ENCODE measurements at regions of chr19 and their contacts with region 1.

Region 1: GRCh38 chr19:45643024-45643926 is 4.1 kb upstream of the EML2 start:
- DNase-seq: peak; percentile 80 to 95 (median 88)
- ATAC-seq: peak; percentile 32
- H3K4me3 ChIP-seq: peak overlapping the region in 1 of 2 experiments; percentile 53
- H3K4me3 Mint-ChIP-seq: peak overlapping the region; percentile 53
- H3K27ac ChIP-seq: peak overlapping the region in 1 of 2 experiments; percentile 93
- H3K27ac Mint-ChIP-seq: peak overlapping the region; percentile 75
- H3K4me1 ChIP-seq: peaks cover 46% of the 10 kb centered on the region
- H3K4me1 Mint-ChIP-seq: peaks cover 43% of the 10 kb centered on the region
- H3K27me3 ChIP-seq: no peaks in the 10 kb centered on the region
- H3K27me3 Mint-ChIP-seq: peaks cover 3% of the 10 kb centered on the region
- CTCF ChIP-seq: peak; percentile 96

Region 2: GRCh38 chr19:45038931-45039893 is 604.1 kb before region 1 on chr19 and contains the start of gene CLASRP:
- CTCF ChIA-PET with region 1: no interaction called
- POLR2A ChIA-PET with region 1: no interaction called
- intact Hi-C with region 1: no loop called
- DNase-seq: peak; percentile 73 to 94 (median 89)
- ATAC-seq: peak; percentile 89
- H3K4me3 ChIP-seq: peak within 1 kb of the TSS; percentile 86 to 89
- H3K4me3 Mint-ChIP-seq: peak within 1 kb of the TSS; percentile 93
- H3K27ac ChIP-seq: peak within 1 kb of the TSS; percentile 92 to 96
- H3K27ac Mint-ChIP-seq: peak within 1 kb of the TSS; percentile 90
- H3K4me1 ChIP-seq: peaks cover 23% of the 10 kb centered on the region
- H3K4me1 Mint-ChIP-seq: peaks cover 32% of the 10 kb centered on the region
- H3K27me3 ChIP-seq: no peaks in the 10 kb centered on the region
- H3K27me3 Mint-ChIP-seq: no peaks in the 10 kb centered on the region
- CTCF ChIP-seq: no peak
- total RNA-seq, gene CLASRP: 144 to 153 TPM

Region 3: GRCh38 chr19:45405435-45406225 is 237.6 kb before region 1 on chr19:
- CTCF ChIA-PET with region 1: no interaction called
- POLR2A ChIA-PET with region 1: no interaction called
- intact Hi-C with region 1: loop called in 1 of 2 experiments (anchors 1 kb)
- DNase-seq: peak; percentile 69 to 89 (median 85)
- ATAC-seq: peak; percentile 63
- H3K4me3 ChIP-seq: peak overlapping the region; percentile 63 to 85
- H3K4me3 Mint-ChIP-seq: peak overlapping the region; percentile 97
- H3K27ac ChIP-seq: peak overlapping the region; percentile 68 to 92
- H3K27ac Mint-ChIP-seq: peak overlapping the region; percentile 95
- H3K4me1 ChIP-seq: peaks cover 25% of the 10 kb centered on the region
- H3K4me1 Mint-ChIP-seq: peaks cover 31% of the 10 kb centered on the region
- H3K27me3 ChIP-seq: peaks cover 16 to 26% of the 10 kb centered on the region in 2 experiments
- H3K27me3 Mint-ChIP-seq: peaks cover 26% of the 10 kb centered on the region
- CTCF ChIP-seq: no peak

Region 4: DNA sequence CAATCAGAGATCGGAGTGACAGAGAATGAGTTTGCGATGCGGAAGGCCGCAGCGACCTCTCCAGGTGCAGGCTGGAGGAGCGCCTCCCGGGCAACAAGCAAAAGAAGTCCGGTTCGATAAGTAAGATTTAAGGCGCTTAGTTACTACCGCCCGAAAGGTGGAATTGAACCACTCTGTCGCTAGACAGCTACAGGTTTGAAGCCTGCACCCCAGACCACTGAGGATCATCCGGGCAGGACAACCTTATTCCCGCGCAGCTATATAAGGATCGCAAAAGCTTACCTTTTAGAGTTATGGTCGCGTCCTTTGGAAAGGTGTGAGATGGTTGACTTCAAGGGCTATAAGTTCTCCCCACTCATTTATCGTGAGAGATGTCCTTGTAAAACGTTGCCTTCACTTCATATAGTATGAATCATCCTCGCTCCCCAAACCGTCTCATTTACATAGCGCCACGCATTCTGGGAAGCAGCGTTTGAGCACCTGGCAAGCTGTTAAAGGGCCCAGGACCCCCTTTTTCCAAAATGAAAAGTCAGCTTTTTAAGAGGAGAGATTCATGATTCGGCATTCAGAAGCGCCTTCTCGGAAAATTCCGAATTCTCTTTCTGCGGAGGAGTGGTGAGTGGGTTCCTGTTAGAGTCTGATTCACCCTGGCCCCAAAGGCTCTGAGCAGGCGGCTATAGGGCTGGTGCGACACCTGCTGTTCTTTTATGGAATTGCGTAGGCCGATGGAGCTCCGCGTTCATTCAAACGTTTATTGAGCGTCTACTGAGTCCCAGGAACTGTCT is 164.6 kb before region 1 on chr19:
- CTCF ChIA-PET with region 1: interaction called, 10 read pairs
- POLR2A ChIA-PET with region 1: interaction called, 3 read pairs
- intact Hi-C with region 1: no loop called
- DNase-seq: peak; percentile 82 to 94 (median 89)
- ATAC-seq: peak; percentile 78
- H3K4me3 ChIP-seq: peak overlapping the region; percentile 57 to 74
- H3K4me3 Mint-ChIP-seq: peak overlapping the region; percentile 87
- H3K27ac ChIP-seq: peak overlapping the region; percentile 88 to 99
- H3K27ac Mint-ChIP-seq: peak overlapping the region; percentile 98
- H3K4me1 ChIP-seq: peaks cover 10% of the 10 kb centered on the region
- H3K4me1 Mint-ChIP-seq: peaks cover 25% of the 10 kb centered on the region
- H3K27me3 ChIP-seq: no peaks in the 10 kb centered on the region
- H3K27me3 Mint-ChIP-seq: no peaks in the 10 kb centered on the region
- CTCF ChIP-seq: peak; percentile 76

Region 5: DNA sequence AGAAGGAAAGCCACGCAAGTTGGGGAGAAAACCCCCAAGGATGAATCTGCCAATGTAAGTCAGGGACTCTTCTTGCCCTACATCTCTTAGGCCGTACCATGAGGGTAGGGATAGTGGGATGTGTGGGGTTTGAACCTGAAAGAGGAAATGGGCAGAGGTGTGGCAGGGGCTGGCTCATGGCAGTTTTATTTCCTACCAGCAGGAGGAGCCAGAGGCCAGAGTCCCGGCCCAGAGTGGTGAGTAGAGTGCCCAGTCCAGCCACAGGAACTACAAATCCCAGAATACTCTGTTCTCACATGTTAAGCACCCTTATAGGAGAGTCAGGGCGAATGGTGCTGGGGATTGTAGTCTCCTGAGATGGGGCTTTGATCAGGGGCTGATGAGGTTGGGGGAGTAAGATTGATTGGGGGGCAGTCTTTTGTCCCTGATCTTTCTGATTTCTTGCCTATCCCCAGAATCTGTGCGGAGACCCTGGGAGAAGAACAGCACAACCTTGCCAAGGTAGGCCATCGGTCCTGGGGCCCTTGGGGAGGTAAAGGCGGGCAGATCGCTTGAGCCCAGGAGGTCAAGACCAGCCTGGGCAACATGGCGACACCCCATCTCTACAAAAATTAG is 119.5 kb before region 1 on chr19:
- CTCF ChIA-PET with region 1: interaction called, 7 read pairs
- POLR2A ChIA-PET with region 1: no interaction called
- intact Hi-C with region 1: loop called (anchors 1 kb)
- DNase-seq: peak; percentile 42 to 90 (median 72)
- ATAC-seq: peak; percentile 99
- H3K4me3 ChIP-seq: no peak overlapping the region
- H3K4me3 Mint-ChIP-seq: no peak overlapping the region
- H3K27ac ChIP-seq: peak overlapping the region in 1 of 2 experiments; percentile 6
- H3K27ac Mint-ChIP-seq: peak overlapping the region; percentile 73
- H3K4me1 ChIP-seq: no peaks in the 10 kb centered on the region
- H3K4me1 Mint-ChIP-seq: peaks cover 11% of the 10 kb centered on the region
- H3K27me3 ChIP-seq: no peaks in the 10 kb centered on the region
- H3K27me3 Mint-ChIP-seq: no peaks in the 10 kb centered on the region
- CTCF ChIP-seq: peak; percentile 75

Region 6: DNA sequence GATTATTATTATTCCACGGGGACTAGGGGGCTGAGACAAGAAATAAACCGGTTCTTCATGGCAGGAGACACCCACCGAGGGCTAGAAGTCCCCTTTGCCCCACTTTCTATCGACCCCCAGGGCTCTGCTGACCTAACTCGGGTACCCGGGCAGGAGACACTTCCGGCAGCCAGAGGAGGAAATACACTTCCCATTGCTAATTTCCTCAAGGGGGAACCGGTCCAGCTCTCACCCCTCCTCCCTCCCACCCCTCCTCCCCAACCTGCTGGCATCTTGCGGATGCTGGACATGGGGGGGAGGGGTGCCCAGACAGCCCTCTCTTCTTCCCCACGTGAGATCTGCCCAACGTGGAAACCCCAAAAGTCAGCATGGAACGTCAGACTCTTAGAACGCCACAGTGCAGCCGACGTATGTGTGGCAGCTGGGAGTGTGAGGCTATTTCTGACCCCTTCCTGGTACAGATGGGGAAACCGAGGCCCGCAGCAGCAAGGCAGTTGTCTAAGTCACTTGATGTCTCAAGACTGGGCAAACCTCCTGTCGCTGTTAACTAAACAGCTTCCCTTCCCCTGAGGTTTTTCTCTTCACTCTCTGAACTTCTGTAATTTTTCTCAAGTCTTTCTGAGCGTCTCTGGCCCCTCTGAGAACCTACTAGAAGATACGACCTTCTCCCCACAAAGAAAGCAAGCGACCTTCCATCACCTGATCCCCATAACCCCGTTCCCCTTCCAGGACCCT is 44.8 kb before region 1 on chr19:
- CTCF ChIA-PET with region 1: interaction called, 105 read pairs
- POLR2A ChIA-PET with region 1: no interaction called
- intact Hi-C with region 1: no loop called
- DNase-seq: peak in 3 of 9 experiments; percentile 13 to 47 (median 30)
- ATAC-seq: peak; percentile 14
- H3K4me3 ChIP-seq: no peak overlapping the region
- H3K4me3 Mint-ChIP-seq: peak overlapping the region; percentile 2
- H3K27ac ChIP-seq: no peak overlapping the region
- H3K27ac Mint-ChIP-seq: no peak overlapping the region
- H3K4me1 ChIP-seq: peaks cover 16% of the 10 kb centered on the region
- H3K4me1 Mint-ChIP-seq: peaks cover 28% of the 10 kb centered on the region
- H3K27me3 ChIP-seq: peaks cover 34 to 53% of the 10 kb centered on the region in 2 experiments
- H3K27me3 Mint-ChIP-seq: peaks cover 60% of the 10 kb centered on the region
- CTCF ChIP-seq: no peak

Region 7: DNA sequence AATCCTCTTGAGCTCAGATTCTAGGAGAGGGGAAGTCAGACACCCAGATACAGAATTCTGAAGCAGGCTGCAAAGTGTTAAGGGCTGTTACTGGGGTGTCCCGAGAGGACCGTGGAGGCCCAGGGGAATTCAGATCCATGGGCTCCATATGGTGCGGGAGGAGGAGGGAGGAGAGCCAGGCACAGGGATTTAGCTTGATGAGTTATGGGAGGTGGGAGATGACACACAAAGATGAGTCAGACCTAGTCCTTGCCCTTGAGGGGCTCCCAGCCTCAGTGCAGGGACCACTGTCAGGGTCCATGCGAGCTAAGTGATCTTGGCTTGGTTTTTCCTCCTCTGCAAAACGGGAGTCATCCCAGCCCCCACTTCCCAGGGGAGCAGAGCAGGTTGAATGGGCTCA is 10.4 kb after region 1 on chr19:
- CTCF ChIA-PET with region 1: interaction called, 28 read pairs
- POLR2A ChIA-PET with region 1: interaction called, 3 read pairs
- intact Hi-C with region 1: no loop called
- DNase-seq: no peak
- ATAC-seq: no peak
- H3K4me3 ChIP-seq: no peak overlapping the region
- H3K4me3 Mint-ChIP-seq: no peak overlapping the region
- H3K27ac ChIP-seq: no peak overlapping the region
- H3K27ac Mint-ChIP-seq: no peak overlapping the region
- H3K4me1 ChIP-seq: no peaks in the 10 kb centered on the region
- H3K4me1 Mint-ChIP-seq: no peaks in the 10 kb centered on the region
- H3K27me3 ChIP-seq: no peaks in the 10 kb centered on the region
- H3K27me3 Mint-ChIP-seq: peaks cover 4% of the 10 kb centered on the region
- CTCF ChIP-seq: no peak

Region 8: DNA sequence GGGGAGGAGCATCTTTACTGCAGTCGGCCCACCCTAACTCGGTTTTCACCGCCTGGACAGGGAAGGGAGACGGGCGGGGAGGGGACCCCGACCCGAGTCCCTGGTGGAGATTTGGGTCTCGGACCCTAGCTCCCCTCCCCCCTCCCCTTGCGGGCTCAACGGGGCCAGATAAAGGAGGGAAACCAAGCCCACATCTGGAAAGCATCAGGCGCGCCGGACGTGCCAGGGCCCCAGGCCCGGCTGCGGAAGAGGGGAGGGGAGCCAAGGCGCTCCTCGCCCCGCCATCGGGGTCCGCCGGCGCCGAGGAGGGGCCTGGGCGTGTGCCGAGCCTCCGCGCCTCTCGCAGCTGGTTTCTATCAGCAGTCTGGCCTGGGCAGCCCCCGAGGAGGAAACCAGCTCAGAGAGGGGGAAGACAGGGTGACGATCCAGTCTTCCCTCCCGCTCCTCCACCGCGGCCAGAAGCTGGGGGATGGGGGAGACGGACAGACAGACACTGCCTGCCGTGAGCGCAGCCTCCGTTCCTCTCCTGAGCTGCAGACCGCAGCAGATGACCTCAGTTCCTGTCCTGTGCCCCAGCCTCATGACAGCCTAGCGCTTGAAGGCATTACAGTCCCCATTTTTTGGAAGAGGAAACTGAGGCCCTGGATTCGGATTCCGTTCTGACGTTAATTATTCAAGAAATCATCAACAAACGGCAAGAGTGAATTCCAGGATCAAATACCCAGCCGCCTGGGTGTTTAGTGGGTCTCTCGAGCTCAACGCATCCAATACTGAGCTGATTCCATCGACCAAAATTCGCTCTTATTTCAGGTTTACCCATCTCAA is 996.3 kb after region 1 on chr19:
- CTCF ChIA-PET with region 1: no interaction called
- POLR2A ChIA-PET with region 1: no interaction called
- intact Hi-C with region 1: no loop called
- DNase-seq: peak in 2 of 9 experiments; percentile 40 to 56
- ATAC-seq: no peak
- H3K4me3 ChIP-seq: peak overlapping the region; percentile 44 to 50
- H3K4me3 Mint-ChIP-seq: peak overlapping the region; percentile 38
- H3K27ac ChIP-seq: no peak overlapping the region
- H3K27ac Mint-ChIP-seq: no peak overlapping the region
- H3K4me1 ChIP-seq: peaks cover 31% of the 10 kb centered on the region
- H3K4me1 Mint-ChIP-seq: peaks cover 12% of the 10 kb centered on the region
- H3K27me3 ChIP-seq: peaks cover 0 to 12% of the 10 kb centered on the region in 2 experiments
- H3K27me3 Mint-ChIP-seq: peaks cover 13% of the 10 kb centered on the region
- CTCF ChIP-seq: no peak

Measured in CD8-positive, alpha-beta T cell (primary cell).